HEK293 (cell line): ENCODE measurements at regions of chr2 and their contacts with region 1.

Region 1: DNA sequence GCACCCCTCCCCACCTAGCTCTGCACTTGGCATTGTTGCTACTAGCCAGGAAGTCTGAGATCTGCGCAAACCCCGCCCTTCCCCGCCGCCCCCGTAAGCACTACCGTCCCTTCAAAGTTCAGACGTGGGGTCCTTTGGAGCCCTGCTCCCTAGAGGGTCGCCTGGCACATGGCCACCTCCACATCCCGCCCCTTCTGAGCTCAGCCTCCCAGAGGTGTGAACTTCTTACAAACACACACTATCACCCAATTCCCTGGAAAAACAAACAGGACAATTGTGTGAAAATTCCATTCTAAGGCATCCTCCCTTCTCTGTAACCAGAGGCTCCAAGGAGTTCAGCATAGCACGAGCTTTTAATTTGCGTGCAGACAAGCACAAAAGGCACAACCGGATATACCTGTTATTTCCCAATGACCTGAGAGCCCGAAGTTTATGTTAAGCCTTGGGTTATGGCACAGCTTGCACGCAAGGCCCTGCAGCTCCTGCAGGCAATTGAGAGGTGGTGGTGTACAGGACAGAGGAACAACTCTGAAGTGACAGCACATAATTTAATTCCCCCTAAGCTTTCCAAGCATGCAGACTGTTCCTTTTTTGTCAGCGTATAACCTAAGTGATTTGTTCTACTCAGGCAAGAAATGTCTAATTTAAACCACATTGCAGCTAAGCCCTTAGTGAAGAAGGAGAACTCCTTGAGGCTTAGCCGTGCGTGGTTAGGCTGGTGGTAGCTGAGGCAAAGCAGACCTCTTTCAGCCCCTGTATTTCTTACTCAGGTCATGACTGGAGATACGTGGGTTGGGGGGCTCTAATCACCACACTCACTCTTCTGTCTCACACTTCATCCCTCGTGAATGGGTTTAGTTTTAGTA is 20.3 kb upstream of the CYP1B1 start:
- H3K4me3 ChIP-seq: no peak overlapping the region
- H3K27ac ChIP-seq: peak overlapping the region; percentile 86
- H3K4me1 ChIP-seq: peaks cover 47% of the 10 kb centered on the region
- CTCF ChIP-seq: no peak

Region 2: DNA sequence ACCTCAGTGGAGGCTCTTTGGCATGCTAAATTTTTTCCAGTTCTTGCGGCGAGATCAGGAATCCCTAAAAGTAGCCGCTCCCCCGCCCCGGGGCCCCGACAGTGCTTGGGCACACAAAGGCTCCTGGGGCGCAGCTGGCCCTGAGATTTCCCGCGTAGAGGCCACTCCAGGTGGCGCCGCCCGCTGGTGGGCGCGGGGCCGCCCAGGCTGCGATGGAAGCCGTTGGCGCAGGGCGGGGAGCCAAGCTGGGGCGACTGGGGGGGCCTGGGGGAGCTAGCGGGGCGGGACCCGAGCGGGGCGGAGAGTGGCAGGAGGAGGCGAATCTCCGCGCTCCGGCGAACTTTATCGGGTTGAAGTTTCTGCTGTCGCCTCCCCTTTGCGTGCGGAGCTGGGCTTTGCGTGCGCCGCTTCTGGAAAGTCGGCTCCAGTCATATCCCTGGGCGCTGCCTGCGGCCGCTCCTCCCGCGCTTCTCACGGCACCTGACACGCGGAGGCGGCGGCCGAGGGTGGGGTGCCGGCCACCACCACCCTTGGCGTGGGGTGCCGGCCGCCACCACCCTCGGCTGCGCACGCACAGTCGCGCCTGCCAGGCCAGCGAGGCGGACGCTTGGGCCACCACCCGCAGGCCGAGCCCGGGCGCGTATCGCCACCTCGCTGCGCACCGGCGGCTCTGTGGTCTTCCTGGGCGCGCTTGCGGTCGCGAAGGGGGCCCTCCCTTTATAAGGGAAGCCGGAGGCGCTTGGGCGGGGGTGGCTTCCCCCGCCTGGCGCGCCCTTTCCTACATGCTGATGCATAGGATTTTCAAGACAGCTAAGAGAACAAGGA is 19.4 kb before region 1 on chr2:
- CTCF ChIA-PET with region 1: interaction called, 12 read pairs
- POLR2A ChIA-PET with region 1: interaction called, 18 read pairs
- H3K4me3 ChIP-seq: peak overlapping the region; percentile 50
- H3K27ac ChIP-seq: peak overlapping the region; percentile 99
- H3K4me1 ChIP-seq: peaks cover 4% of the 10 kb centered on the region
- CTCF ChIP-seq: peak; percentile 60; the same call in 1 of the 2 replicates

Region 3: GRCh38 chr2:38214209-38214717 is 118.0 kb after region 1 on chr2:
- CTCF ChIA-PET with region 1: no interaction called
- POLR2A ChIA-PET with region 1: no interaction called
- H3K4me3 ChIP-seq: no peak overlapping the region
- H3K27ac ChIP-seq: no peak overlapping the region
- H3K4me1 ChIP-seq: no peaks in the 10 kb centered on the region
- CTCF ChIP-seq: no peak